Activated naive CD4-positive, alpha-beta T cell treated with anti-CD3 and anti-CD28 coated beads for 36 hours (primary cell): ENCODE measurements at regions of chr1 and their contacts with region 1.

Region 1: GRCh38 chr1:18913065-18913835 is 10.9 kb upstream of the ALDH4A1 start:
- DNase-seq: peak; percentile 86
- H3K4me3 Mint-ChIP-seq: no peak overlapping the region
- H3K27ac Mint-ChIP-seq: peak overlapping the region; percentile 85
- H3K4me1 Mint-ChIP-seq: peaks cover 25% of the 10 kb centered on the region
- H3K27me3 Mint-ChIP-seq: no peaks in the 10 kb centered on the region

Region 2: GRCh38 chr1:18109756-18110597 is 803.3 kb before region 1 on chr1:
- CTCF ChIA-PET with region 1: no interaction called
- intact Hi-C with region 1: no loop called
- DNase-seq: peak; percentile 47
- H3K4me3 Mint-ChIP-seq: no peak overlapping the region
- H3K27ac Mint-ChIP-seq: no peak overlapping the region
- H3K4me1 Mint-ChIP-seq: peaks cover 12% of the 10 kb centered on the region
- H3K27me3 Mint-ChIP-seq: peaks cover 66% of the 10 kb centered on the region

Region 3: GRCh38 chr1:18890711-18891425 is 22.4 kb before region 1 on chr1:
- CTCF ChIA-PET with region 1: interaction called, 23 read pairs
- intact Hi-C with region 1: no loop called
- DNase-seq: no peak
- H3K4me3 Mint-ChIP-seq: no peak overlapping the region
- H3K27ac Mint-ChIP-seq: no peak overlapping the region
- H3K4me1 Mint-ChIP-seq: no peaks in the 10 kb centered on the region
- H3K27me3 Mint-ChIP-seq: no peaks in the 10 kb centered on the region

Region 4: DNA sequence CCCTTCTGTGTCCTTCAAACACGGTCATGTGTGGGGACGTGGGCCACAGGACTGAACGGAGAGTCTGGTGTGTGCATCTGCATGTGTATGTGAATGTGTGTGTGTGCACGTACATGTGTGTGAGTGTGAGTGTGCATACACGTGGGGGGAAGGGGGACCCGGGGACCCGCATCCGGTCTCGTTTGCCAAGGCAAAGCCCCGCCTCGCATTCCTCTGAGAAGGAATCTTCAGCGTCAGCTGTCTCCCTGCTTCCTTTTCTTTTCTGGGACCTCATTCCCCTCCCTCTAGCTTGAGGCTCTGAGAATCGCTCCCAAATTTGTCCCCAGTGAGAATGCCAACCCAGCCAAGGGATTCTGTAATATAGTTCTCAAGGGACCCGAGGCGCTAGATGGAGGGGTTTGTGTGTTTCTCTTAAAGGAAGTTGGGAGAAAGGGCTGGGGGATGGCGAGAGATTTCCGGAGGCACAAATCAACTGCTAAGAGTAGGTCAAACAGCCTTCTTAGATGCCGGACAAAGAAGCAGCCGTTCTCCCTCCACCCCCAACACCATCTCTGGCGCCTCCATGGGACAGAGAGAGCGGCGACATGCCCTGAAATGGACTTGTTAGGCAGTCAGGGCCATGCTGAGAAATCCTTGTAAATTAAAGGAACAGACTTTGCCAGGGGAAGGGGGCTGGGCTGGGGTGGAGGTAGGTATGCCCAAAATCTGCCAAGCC is 36.6 kb after region 1 on chr1:
- CTCF ChIA-PET with region 1: interaction called, 28 read pairs
- intact Hi-C with region 1: no loop called
- DNase-seq: peak; percentile 45
- H3K4me3 Mint-ChIP-seq: peak overlapping the region; percentile 75
- H3K27ac Mint-ChIP-seq: peak overlapping the region; percentile 93
- H3K4me1 Mint-ChIP-seq: peaks cover 95% of the 10 kb centered on the region
- H3K27me3 Mint-ChIP-seq: no peaks in the 10 kb centered on the region

Region 5: GRCh38 chr1:18965206-18966173 is 52.2 kb after region 1 on chr1:
- CTCF ChIA-PET with region 1: interaction called, 21 read pairs
- intact Hi-C with region 1: no loop called
- DNase-seq: peak; percentile 86
- H3K4me3 Mint-ChIP-seq: no peak overlapping the region
- H3K27ac Mint-ChIP-seq: peak overlapping the region; percentile 77
- H3K4me1 Mint-ChIP-seq: peaks cover 12% of the 10 kb centered on the region
- H3K27me3 Mint-ChIP-seq: no peaks in the 10 kb centered on the region

Region 6: DNA sequence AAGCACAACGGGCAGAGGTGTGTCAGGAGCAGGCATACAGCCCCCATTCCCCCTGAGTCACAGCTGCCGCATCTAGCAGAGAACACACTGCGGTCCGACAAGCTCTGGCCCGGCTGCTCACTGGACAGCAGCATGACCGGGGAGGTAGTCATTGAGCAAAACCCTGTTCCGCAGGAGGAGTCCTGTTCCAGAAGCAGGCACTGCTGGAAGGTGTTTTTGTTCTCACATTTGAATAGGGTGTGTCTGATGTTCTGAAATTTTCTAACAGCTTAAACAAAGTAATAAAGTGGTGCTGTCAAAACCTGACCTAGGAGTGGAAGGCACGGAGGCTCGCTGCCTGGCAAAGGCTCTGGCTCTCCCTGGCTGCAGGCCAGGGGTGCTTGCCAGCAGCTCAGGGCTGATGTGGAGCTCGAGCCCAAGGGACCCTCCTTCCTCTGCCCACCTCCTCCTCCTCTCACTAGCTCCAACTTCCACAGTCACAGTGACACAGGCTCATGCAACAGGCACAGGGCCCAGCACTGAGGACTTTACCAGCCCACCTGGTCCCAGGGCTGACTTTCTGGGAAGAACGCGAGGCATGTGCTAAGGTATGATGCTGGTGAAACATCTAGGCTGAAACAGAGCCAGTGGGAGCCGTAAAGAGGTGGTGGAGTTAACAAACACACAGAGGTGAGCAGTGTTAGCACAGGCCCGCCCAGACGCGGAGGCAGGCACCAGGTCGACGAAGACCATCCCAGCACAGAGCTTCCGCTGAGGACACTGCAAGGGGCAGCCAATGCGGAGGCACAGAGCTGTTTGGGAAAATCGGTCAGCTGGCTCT is 161.9 kb after region 1 on chr1:
- CTCF ChIA-PET with region 1: interaction called, 22 read pairs
- intact Hi-C with region 1: no loop called
- DNase-seq: no peak
- H3K4me3 Mint-ChIP-seq: no peak overlapping the region
- H3K27ac Mint-ChIP-seq: peak overlapping the region; percentile 74
- H3K4me1 Mint-ChIP-seq: peaks cover 53% of the 10 kb centered on the region
- H3K27me3 Mint-ChIP-seq: no peaks in the 10 kb centered on the region